ENCODE measurements at regions of chrX and their contacts with region 1.

Region 1: GRCh38 chrX:63275127-63275526 is 76.0 kb downstream of the SPIN4 start:
- DNase-seq: peak; percentile 57
- ATAC-seq: peak; percentile 37
- H3K4me3 Mint-ChIP-seq: no peak overlapping the region
- H3K27ac Mint-ChIP-seq: no peak overlapping the region
- H3K4me1 Mint-ChIP-seq: no peaks in the 10 kb centered on the region
- H3K27me3 Mint-ChIP-seq: no peaks in the 10 kb centered on the region
- CTCF ChIP-seq: peak; percentile 57

Region 2: DNA sequence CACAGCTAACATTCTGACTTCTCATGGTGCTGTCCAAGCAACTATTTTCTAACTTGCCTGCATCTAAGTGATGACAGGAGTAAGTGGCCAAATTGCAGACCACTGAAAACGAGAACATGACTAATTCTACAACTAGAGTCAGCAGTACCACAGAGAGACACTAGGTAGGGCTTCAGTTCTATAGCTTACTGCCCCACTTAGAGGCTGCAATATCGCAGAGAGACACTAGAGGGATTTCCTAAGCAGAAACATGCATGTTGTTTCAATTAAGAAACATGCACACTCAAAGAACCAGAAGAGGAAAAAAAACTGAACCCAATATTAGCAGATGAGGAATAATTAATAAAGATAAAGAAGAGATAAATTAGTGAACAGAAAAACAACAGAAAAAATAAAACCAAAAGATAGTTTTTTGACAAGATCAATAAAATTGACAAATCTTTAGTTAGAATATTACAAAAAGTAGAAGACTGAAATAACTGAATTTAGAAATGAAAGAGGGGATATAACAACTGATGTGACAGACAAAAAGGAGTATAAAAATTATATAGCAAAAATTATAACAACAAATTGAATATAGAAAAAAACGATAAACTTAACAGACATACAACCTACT is 24.8 kb before region 1 on chrX:
- CTCF ChIA-PET with region 1: interaction called, 12 read pairs
- POLR2A ChIA-PET with region 1: no interaction called
- intact Hi-C with region 1: no loop called
- DNase-seq: peak; percentile 65
- ATAC-seq: peak; percentile 100
- H3K4me3 Mint-ChIP-seq: no peak overlapping the region
- H3K27ac Mint-ChIP-seq: no peak overlapping the region
- H3K4me1 Mint-ChIP-seq: no peaks in the 10 kb centered on the region
- H3K27me3 Mint-ChIP-seq: peaks cover 3% of the 10 kb centered on the region
- CTCF ChIP-seq: peak; percentile 98

Region 3: DNA sequence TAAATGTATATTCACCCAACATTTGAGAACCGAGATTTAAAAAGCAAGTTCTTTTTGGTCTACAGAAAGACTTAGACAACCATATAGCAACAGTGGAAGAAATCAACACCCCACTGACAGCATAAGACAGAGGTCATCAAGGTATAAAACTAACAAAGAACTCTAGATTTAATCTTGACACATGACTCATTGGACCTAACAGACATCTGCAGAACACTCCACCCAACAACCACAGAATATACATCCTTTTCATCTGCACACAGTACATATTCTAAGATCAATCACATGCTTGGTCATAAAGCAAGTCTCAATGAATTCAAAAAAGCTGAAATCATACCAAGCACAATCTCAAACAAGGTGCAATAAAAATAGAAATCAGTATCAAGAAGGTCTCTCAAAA is 10.2 kb after region 1 on chrX:
- CTCF ChIA-PET with region 1: interaction called, 11 read pairs
- POLR2A ChIA-PET with region 1: no interaction called
- intact Hi-C with region 1: no loop called
- DNase-seq: no peak
- ATAC-seq: no peak
- H3K4me3 Mint-ChIP-seq: no peak overlapping the region
- H3K27ac Mint-ChIP-seq: no peak overlapping the region
- H3K4me1 Mint-ChIP-seq: no peaks in the 10 kb centered on the region
- H3K27me3 Mint-ChIP-seq: no peaks in the 10 kb centered on the region
- CTCF ChIP-seq: no peak

Measured in activated CD8-positive, alpha-beta T cell treated with anti-CD3 and anti-CD28 coated beads for 36 hours (primary cell).